A549 (cell line): ENCODE measurements at regions of chr7 and their contacts with region 1.

Region 1: GRCh38 chr7:82481499-82482097 is 38.0 kb upstream of the CACNA2D1 start:
- DNase-seq: peak; percentile 29 to 31
- ATAC-seq: peak in 1 of 2 experiments; percentile 68; a peak in 1 of 6 replicates
- H3K4me3 ChIP-seq: no peak overlapping the region
- H3K27ac ChIP-seq: no peak overlapping the region
- H3K4me1 ChIP-seq: no peaks in the 10 kb centered on the region
- CTCF ChIP-seq: peak; percentile 74
- EP300 ChIP-seq: no peak
- POLR2A ChIP-seq: no peak
- RAD21 ChIP-seq: peak; percentile 62 to 66

Region 2: DNA sequence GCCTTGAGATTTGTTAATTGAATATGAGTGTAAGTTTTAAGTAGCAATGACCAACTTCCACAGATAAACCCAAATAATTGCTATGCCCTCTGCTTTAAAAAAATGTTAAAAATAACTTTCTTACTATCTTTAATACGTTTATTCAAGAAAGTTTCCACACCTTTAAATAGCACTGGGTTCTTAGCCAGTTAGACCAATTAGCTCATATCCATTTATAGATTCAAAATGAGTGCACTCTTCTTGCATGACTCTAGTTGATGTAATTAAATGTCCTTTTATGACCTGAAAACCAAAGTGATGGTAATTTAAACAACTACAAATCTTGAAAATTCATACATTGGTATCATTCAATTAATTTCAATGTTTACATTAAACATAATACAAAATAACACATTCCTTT is 12.8 kb after region 1 on chr7:
- CTCF ChIA-PET with region 1: interaction called, 10 read pairs
- POLR2A ChIA-PET with region 1: no interaction called
- DNase-seq: no peak
- ATAC-seq: no peak
- H3K4me3 ChIP-seq: no peak overlapping the region
- H3K27ac ChIP-seq: no peak overlapping the region
- H3K4me1 ChIP-seq: no peaks in the 10 kb centered on the region
- CTCF ChIP-seq: no peak
- EP300 ChIP-seq: no peak
- POLR2A ChIP-seq: no peak
- RAD21 ChIP-seq: no peak